Astrocyte of the cerebellum (primary cell): ENCODE measurements at regions of chr2 and their contacts with region 1.

Region 1: GRCh38 chr2:206688990-206689389 is 29.2 kb downstream of the DYTN start:
- DNase-seq: no peak
- H3K4me3 ChIP-seq: no peak overlapping the region
- CTCF ChIP-seq: no peak

Region 2: DNA sequence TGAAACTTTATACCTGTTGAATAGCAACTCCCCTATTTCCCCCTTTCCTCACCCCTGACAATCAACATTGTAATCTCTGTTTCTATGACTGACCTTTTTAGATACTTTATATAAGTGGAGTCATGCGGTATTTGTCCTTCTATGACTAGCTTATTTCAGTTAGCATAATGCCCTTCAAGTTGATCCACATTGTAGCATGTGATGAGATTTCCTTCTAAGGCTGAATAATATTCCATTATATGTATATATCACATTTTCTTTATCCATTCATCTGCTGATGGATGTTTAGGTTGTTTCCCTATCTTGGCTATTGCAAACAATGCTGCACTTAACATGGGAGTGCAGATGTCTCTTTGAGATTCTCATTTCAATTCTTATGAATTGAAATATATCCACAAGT is 85.9 kb after region 1 on chr2:
- in situ Hi-C with region 1: loop called (anchors 5 kb)
- DNase-seq: no peak
- H3K4me3 ChIP-seq: no peak overlapping the region
- CTCF ChIP-seq: no peak